Endothelial cell of umbilical vein (primary cell): ENCODE measurements at regions of chr1 and their contacts with region 1.

Region 1: DNA sequence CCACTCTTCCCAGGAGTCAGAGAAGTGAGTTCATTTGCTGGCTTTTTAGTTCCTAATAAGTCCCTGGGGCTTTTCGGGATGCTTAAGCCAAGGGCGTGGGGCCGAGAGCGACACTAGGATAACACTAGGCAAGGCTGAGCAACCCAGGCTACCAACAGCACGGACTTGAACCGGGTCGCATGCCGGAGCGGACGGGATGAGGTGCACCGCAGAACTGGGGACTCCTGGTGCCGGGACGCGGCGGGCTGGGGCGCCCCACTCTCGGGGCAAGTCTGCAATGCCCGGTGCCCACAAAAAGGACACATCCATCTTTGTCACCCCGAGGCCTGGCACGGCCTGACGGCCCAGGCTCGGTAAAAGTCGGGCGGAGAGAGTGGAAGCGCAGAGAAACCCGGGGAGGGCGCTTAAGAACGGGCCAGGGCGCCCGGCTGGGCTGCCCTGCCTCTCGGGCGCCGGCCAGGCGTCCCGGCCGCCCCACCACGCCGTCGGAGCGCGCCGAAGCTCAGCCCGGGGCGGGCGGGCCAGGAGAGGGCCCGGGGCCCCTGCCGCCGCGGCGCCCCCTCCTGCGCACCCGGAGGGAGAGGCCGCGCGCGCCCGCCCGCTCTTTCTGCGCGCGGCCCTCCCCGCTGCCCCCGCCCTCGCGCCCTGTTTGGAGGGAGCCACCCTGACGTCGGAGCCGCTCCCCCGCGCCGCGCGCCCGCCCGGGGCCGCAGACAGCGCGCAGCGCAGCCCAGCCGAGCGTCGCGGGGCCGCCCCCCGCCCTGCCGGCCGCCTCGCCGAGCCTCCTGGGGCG is at the start of gene NBL1:
- DNase-seq: peak; percentile 54
- H3K4me3 ChIP-seq: peak within 1 kb of the TSS; percentile 31 to 49 (median 31)
- H3K27ac ChIP-seq: no peak within 1 kb of the TSS
- H3K4me1 ChIP-seq: peaks cover 12% of the 10 kb centered on the region
- H3K27me3 ChIP-seq: peaks cover 0 to 1% of the 10 kb centered on the region in 2 experiments
- CTCF ChIP-seq: no peak
- POLR2A ChIP-seq: no peak
- total RNA-seq, gene NBL1: 39.8 and 40.5 TPM in 2 replicates

Region 2: DNA sequence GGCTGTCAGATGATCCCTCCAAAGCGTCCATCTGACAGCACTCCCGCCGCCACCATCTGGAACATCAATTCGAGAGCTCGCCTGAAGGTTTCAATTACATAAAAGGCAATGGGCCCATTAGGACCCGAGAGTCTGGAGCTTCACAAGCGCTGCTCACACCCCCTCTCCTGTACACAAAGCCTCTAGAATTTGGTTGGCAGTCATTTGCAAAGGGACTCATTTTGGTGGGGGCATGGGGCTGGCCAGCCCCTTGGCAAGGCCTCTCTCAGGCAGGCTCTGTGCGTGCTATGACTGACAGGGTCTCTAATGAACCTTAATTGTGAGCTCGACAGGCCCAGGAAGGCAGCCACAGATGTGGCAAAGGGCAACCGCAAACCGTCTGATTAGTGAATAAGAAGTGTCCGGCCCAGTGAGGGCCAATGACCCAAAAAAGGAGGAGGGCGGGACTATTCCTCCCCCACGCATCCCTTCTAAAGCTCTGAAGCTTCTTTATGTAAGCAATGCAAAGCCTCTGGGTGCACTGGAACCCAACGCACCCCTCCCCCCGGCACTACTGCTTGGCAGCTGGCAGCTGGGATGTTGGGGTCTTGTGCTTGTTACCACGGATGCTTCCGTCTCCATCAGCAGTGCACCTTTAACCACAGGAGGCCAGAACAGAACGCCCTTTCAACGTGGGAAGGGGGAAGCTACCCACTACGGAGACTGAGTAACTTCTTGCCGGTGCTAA is 237.9 kb before region 1 on chr1:
- CTCF ChIA-PET with region 1: no interaction called
- POLR2A ChIA-PET with region 1: no interaction called
- dilution Hi-C with region 1: loop called (anchors 25 kb)
- intact Hi-C with region 1: no loop called
- DNase-seq: no peak
- H3K4me3 ChIP-seq: no peak overlapping the region
- H3K27ac ChIP-seq: no peak overlapping the region
- H3K4me1 ChIP-seq: no peaks in the 10 kb centered on the region
- H3K27me3 ChIP-seq: no peaks in the 10 kb centered on the region
- CTCF ChIP-seq: no peak
- POLR2A ChIP-seq: no peak

Region 3: GRCh38 chr1:19596714-19597495 is 46.9 kb before region 1 on chr1:
- CTCF ChIA-PET with region 1: interaction called, 5 read pairs
- POLR2A ChIA-PET with region 1: interaction called, 4 read pairs
- dilution Hi-C with region 1: no loop called
- intact Hi-C with region 1: loop called (anchors 1 kb)
- DNase-seq: peak; percentile 97
- H3K4me3 ChIP-seq: peak overlapping the region; percentile 73 to 98 (median 91)
- H3K27ac ChIP-seq: peak overlapping the region; percentile 96
- H3K4me1 ChIP-seq: peaks cover 12% of the 10 kb centered on the region
- H3K27me3 ChIP-seq: peaks cover 2% of the 10 kb centered on the region in 2 experiments
- CTCF ChIP-seq: no peak
- POLR2A ChIP-seq: peak; percentile 70

Region 4: DNA sequence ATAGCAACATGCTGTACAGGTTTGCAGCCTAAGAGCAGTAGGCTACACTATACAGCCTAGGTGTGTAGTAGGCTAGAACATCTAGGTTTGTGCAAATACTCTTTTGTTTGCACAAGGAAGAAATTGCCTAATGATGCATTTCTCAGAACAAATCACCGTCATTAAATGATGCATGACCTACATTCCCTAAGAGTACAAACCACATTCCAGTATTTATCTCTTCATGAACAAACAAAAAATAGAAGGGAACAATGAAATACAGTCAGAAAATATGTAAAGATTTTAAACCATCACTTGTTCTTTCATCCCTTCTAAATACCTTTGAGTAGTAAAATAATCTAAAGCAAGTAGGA is 1253.0 kb after region 1 on chr1:
- CTCF ChIA-PET with region 1: no interaction called
- POLR2A ChIA-PET with region 1: no interaction called
- dilution Hi-C with region 1: no loop called
- intact Hi-C with region 1: no loop called
- DNase-seq: no peak
- H3K4me3 ChIP-seq: no peak overlapping the region
- H3K27ac ChIP-seq: no peak overlapping the region
- H3K4me1 ChIP-seq: no peaks in the 10 kb centered on the region
- H3K27me3 ChIP-seq: no peaks in the 10 kb centered on the region
- CTCF ChIP-seq: no peak
- POLR2A ChIP-seq: no peak